Gastrocnemius medialis (tissue), 4 donors: ENCODE measurements at regions of chr1 and their contacts with region 1.

Region 1: DNA sequence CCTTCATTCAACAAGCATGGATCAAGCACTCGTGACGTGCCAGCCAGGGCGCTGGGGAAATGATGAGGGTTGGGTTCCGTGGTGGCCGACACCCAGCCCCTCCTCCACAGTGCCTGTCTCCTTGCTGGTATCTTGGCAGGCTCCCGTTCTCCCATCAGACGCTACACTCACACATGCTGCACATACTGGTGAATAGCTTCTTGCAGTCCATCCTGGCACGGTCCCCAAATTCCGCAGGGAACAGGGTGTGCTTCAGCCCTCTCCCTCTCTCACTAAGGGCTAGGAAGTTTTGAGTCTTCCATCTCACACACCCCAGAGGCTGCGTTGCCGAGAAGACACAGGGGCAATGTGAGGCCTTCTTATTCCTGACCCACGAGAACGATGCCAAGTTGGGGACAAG is 10.1 kb upstream of the MEF2D start:
- DNase-seq: peak; percentile 99 to 100
- ATAC-seq: peak; percentile 73 to 75
- H3K4me3 ChIP-seq: peak overlapping the region; percentile 5 to 92 (median 56)
- H3K27ac ChIP-seq: peak overlapping the region; percentile 96 to 99 (median 98)
- H3K4me1 ChIP-seq: peaks cover 34 to 57% of the 10 kb centered on the region in 2 donors
- H3K27me3 ChIP-seq: no peaks in the 10 kb centered on the region
- CTCF ChIP-seq: no peak
- POLR2A ChIP-seq: no peak

Region 2: GRCh38 chr1:156490401-156491032 is 20.2 kb before region 1 on chr1:
- in situ Hi-C with region 1: no loop called
- intact Hi-C with region 1: loop called (anchors 1 kb)
- DNase-seq: peak; percentile 65 to 83
- ATAC-seq: peak; percentile 46 to 55
- H3K4me3 ChIP-seq: peak overlapping the region; percentile 32 to 89 (median 56)
- H3K27ac ChIP-seq: peak overlapping the region; percentile 96 to 99 (median 98)
- H3K4me1 ChIP-seq: peaks cover 96 to 98% of the 10 kb centered on the region in 2 donors
- H3K27me3 ChIP-seq: no peaks in the 10 kb centered on the region
- CTCF ChIP-seq: peak; percentile 51 to 70 (median 53)
- POLR2A ChIP-seq: peak; percentile 45 to 60